ENCODE measurements at regions of chr12 and their contacts with region 1.

Region 1: DNA sequence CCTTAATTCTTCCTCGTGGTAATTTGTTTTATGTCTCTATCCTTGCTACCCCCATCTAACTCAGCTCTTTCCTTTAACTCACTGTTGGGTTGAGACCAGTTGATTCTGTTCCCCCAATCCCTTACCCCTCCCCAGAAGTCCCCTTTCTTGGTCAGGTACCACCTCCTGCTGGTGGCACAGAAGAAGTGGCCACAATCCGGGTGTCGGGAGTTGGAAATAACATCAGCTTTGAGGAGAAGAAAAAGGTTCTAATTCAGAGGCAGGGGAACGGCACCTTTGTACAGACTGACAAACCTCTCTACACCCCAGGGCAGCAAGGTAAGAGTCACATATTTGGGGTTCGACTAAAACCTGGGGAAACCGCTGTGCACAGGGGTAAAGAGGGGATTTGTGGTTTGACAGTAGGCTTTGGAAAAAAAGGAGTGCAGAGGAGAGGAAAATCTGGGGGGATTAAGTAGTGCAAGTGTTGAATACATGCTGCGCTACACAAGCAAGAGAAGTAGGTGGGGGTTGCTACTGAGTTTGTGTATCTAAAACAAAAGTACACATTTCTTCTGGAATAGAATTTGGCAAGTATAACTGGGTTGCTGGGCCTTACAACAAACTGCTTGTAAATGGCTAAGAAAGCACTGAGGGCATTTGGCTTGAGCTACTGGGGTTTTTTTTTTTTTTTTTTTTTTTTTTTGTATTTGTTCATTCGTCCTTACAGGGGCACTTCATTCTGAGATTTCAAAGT is 1.3 kb downstream of the A2ML1 start:
- DNase-seq: peak in 2 of 5 donors; percentile 14 to 26
- ATAC-seq: peak in 2 of 4 donors; percentile 46 to 53
- H3K4me3 ChIP-seq: no peak overlapping the region
- H3K27ac ChIP-seq: no peak overlapping the region
- H3K4me1 ChIP-seq: no peaks in the 10 kb centered on the region
- H3K27me3 ChIP-seq: no peaks in the 10 kb centered on the region
- CTCF ChIP-seq: peak; percentile 30 to 70 (median 52)
- POLR2A ChIP-seq: no peak

Region 2: DNA sequence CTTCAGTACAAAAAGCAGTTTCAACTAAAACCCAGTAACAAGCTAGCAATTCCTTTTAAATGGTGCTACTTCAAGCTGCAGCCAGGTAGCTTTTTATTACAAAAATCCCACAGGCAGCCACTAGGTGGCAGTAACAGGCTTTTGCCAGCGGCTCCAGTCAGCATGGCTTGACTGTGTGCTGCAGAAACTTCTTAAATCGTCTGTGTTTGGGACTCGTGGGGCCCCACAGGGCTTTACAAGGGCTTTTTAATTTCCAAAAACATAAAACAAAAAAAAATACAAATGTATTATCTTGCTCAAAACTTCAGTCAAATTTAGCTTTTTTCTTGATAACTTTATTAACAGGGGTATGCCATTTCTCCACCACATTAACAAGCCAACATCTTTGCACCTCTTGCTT is 279.4 kb before region 1 on chr12:
- intact Hi-C with region 1: loop called in 1 of 10 experiments (anchors 10 kb)
- DNase-seq: peak in 4 of 5 donors; percentile 51 to 62 (median 56)
- ATAC-seq: peak; percentile 54 to 65 (median 62)
- H3K4me3 ChIP-seq: no peak overlapping the region
- H3K27ac ChIP-seq: no peak overlapping the region
- H3K4me1 ChIP-seq: peaks cover 0 to 9% (median 0%) of the 10 kb centered on the region in 12 donors
- H3K27me3 ChIP-seq: peaks cover 0 to 16% (median 0%) of the 10 kb centered on the region in 9 donors
- CTCF ChIP-seq: peak; percentile 75 to 97 (median 92)
- POLR2A ChIP-seq: no peak

Region 3: GRCh38 chr12:8681041-8681902 is 142.5 kb before region 1 on chr12:
- intact Hi-C with region 1: loop called (anchors 1 to 10 kb)
- DNase-seq: peak in 2 of 5 donors; percentile 11 to 30
- ATAC-seq: peak; percentile 62 to 91 (median 66)
- H3K4me3 ChIP-seq: peak overlapping the region in 4 of 12 donors; percentile 11 to 25 (median 16)
- H3K27ac ChIP-seq: peak overlapping the region in 11 of 12 donors; percentile 21 to 73 (median 54)
- H3K4me1 ChIP-seq: peaks cover 0 to 20% (median 0%) of the 10 kb centered on the region in 12 donors
- H3K27me3 ChIP-seq: no peaks in the 10 kb centered on the region
- CTCF ChIP-seq: no peak
- POLR2A ChIP-seq: no peak

Region 4: GRCh38 chr12:8771072-8771471 is 52.7 kb before region 1 on chr12:
- intact Hi-C with region 1: no loop called
- DNase-seq: no peak
- ATAC-seq: no peak
- H3K4me3 ChIP-seq: no peak overlapping the region
- H3K27ac ChIP-seq: no peak overlapping the region
- H3K4me1 ChIP-seq: peaks cover 0 to 17% (median 0%) of the 10 kb centered on the region in 12 donors
- H3K27me3 ChIP-seq: no peaks in the 10 kb centered on the region
- CTCF ChIP-seq: no peak
- POLR2A ChIP-seq: no peak

Measured in heart left ventricle (tissue), 16 donors.